ENCODE measurements at regions of chr9 and their contacts with region 1.

Region 1: DNA sequence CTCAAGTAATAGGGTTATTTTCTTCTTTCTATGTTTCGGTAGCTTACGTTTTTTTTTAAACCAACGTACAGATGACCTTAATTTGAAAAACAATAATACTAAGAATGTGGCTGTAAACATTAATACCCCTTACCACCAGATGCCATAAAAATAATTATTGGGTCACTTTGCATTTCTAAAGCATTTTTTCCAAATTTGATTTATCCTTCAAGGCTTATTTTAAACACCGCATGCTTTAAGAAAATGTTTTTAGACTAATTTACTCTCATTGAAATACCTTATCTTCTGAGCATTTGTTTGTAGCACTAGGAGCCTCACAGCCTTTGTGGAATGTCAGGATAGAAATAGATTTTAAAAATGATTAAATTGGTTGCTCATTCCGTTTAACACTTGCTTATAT is 5.8 kb upstream of the APBA1 start:
- DNase-seq: no peak
- ATAC-seq: no peak
- H3K4me3 ChIP-seq: no peak overlapping the region
- H3K4me3 Mint-ChIP-seq: no peak overlapping the region
- H3K27ac ChIP-seq: no peak overlapping the region
- H3K27ac Mint-ChIP-seq: no peak overlapping the region
- H3K4me1 ChIP-seq: peaks cover 5% of the 10 kb centered on the region
- H3K4me1 Mint-ChIP-seq: peaks cover 11% of the 10 kb centered on the region
- H3K27me3 ChIP-seq: peaks cover 0 to under 1% of the 10 kb centered on the region in 2 experiments
- H3K27me3 Mint-ChIP-seq: peaks cover 27% of the 10 kb centered on the region
- CTCF ChIP-seq: no peak

Region 2: GRCh38 chr9:69696802-69697201 is 18.9 kb after region 1 on chr9:
- CTCF ChIA-PET with region 1: no interaction called
- POLR2A ChIA-PET with region 1: no interaction called
- intact Hi-C with region 1: loop called in 1 of 2 experiments (anchors 2 kb)
- DNase-seq: no peak
- ATAC-seq: no peak
- H3K4me3 ChIP-seq: no peak overlapping the region
- H3K4me3 Mint-ChIP-seq: no peak overlapping the region
- H3K27ac ChIP-seq: no peak overlapping the region
- H3K27ac Mint-ChIP-seq: no peak overlapping the region
- H3K4me1 ChIP-seq: no peaks in the 10 kb centered on the region
- H3K4me1 Mint-ChIP-seq: no peaks in the 10 kb centered on the region
- H3K27me3 ChIP-seq: peaks cover 0 to 6% of the 10 kb centered on the region in 2 experiments
- H3K27me3 Mint-ChIP-seq: peaks cover 19% of the 10 kb centered on the region
- CTCF ChIP-seq: no peak

Region 3: DNA sequence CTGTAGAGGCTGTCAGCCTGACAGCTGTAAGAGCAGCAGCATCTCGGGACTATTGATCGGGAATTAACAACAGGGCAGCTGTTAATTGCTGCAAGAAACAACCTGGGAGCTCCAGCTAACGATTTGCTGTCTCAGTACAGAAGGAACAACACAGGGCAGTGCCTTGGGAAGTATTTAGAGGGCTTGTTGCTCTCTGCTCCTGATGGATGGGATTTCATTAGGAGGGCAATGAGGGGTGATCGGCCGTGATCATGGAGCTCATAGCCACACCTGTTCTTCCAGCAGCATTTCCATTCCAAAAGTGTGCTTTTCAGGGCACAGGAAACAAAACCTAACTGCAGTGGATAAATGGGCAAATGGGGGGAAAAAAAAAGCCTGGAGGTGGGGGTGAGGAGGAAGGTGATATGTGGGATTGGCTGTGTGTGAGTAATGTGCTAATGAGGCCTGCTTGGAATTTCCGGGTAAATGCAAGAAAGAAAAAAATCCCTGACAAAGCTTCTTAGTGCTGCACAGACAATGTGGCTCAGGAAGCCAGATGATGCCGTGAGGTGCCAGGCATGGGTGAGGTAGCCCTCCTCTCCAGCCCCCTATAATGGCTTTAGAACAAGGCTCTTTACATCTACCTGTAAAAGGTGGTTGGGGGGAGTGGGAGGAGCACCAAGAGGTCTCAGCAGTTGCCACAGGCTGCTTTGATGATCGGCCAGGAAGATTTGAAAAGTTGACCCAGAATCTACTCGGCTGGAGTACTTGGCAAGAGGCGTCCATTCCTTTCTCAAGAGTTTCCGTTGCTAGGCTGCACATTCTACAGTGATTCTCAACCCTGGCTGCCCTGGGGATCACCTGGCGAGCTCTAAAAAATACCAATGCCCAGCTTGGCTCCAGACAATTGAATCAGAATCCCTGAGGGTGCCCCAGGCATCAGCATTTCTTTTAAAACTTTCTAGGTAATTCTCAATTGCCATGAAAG is 876.1 kb after region 1 on chr9:
- CTCF ChIA-PET with region 1: no interaction called
- POLR2A ChIA-PET with region 1: no interaction called
- intact Hi-C with region 1: no loop called
- DNase-seq: peak in 1 of 14 experiments; percentile 10
- ATAC-seq: no peak
- H3K4me3 ChIP-seq: no peak overlapping the region
- H3K4me3 Mint-ChIP-seq: no peak overlapping the region
- H3K27ac ChIP-seq: no peak overlapping the region
- H3K27ac Mint-ChIP-seq: no peak overlapping the region
- H3K4me1 ChIP-seq: no peaks in the 10 kb centered on the region
- H3K4me1 Mint-ChIP-seq: no peaks in the 10 kb centered on the region
- H3K27me3 ChIP-seq: no peaks in the 10 kb centered on the region
- H3K27me3 Mint-ChIP-seq: no peaks in the 10 kb centered on the region
- CTCF ChIP-seq: no peak